ENCODE measurements at regions of chr4 and their contacts with region 1.

Region 1: GRCh38 chr4:40719008-40719623 is 30.6 kb upstream of the NSUN7 start:
- DNase-seq: no peak
- H3K4me3 ChIP-seq: no peak overlapping the region
- H3K27ac ChIP-seq: peak overlapping the region; percentile 73 to 79 (median 75)
- H3K4me1 ChIP-seq: peaks cover 8 to 42% (median 27%) of the 10 kb centered on the region in 4 donors
- H3K27me3 ChIP-seq: no peaks in the 10 kb centered on the region
- CTCF ChIP-seq: peak; percentile 29 to 72 (median 40)
- EP300 ChIP-seq: no peak
- POLR2A ChIP-seq: no peak

Region 2: DNA sequence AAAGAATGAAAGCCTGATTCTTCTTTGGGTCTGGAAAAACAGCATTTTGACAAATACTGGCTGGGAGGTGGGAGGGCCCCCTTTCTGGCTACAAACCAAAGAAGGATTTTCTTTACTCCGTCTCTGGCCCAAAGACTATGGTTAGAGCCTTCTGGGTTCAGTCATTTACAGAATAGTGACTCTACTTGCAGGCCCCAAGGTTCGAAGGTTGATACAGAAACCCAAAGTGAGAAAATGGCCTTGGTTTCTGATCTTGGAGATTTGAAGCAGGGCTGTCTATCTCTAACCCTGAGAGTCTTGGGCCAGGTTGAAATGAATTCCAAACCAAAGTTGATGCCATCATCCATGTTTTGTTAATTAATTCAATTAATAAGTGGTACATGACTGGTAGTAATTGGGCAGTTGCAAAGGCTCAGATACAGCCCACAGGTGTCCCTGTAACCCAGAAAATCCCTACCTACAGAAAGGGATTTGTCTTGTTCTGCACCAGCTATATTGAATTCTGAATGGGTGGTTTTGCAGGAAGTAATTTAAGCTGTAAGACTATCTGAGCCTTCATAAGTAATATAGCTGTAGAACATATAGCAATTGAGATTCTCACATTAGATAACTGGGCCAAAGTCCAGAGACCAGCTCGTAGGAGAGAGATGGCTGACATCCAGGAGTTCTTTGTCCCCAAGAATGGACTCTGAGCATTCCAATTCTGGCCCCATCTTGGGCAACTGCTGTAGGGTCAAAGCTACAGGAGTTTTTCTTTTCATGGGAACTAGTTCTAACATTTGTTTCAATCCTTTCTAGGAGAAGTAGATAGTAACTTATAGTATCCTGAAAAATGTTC is 349.5 kb before region 1 on chr4:
- in situ Hi-C with region 1: loop called in 1 of 4 experiments (anchors 10 kb)
- intact Hi-C with region 1: no loop called
- DNase-seq: peak; percentile 65
- H3K4me3 ChIP-seq: no peak overlapping the region
- H3K27ac ChIP-seq: peak overlapping the region; percentile 74 to 83 (median 80)
- H3K4me1 ChIP-seq: peaks cover 0 to 35% (median 15%) of the 10 kb centered on the region in 4 donors
- H3K27me3 ChIP-seq: no peaks in the 10 kb centered on the region
- CTCF ChIP-seq: no peak
- EP300 ChIP-seq: no peak
- POLR2A ChIP-seq: no peak

Region 3: GRCh38 chr4:40525811-40526598 is 193.1 kb before region 1 on chr4:
- in situ Hi-C with region 1: loop called in 1 of 4 experiments (anchors 25 kb)
- intact Hi-C with region 1: no loop called
- DNase-seq: no peak
- H3K4me3 ChIP-seq: no peak overlapping the region
- H3K27ac ChIP-seq: peak overlapping the region; percentile 28 to 51 (median 43)
- H3K4me1 ChIP-seq: peaks cover 0 to 17% (median 10%) of the 10 kb centered on the region in 4 donors
- H3K27me3 ChIP-seq: no peaks in the 10 kb centered on the region
- CTCF ChIP-seq: no peak
- EP300 ChIP-seq: no peak
- POLR2A ChIP-seq: no peak

Region 4: DNA sequence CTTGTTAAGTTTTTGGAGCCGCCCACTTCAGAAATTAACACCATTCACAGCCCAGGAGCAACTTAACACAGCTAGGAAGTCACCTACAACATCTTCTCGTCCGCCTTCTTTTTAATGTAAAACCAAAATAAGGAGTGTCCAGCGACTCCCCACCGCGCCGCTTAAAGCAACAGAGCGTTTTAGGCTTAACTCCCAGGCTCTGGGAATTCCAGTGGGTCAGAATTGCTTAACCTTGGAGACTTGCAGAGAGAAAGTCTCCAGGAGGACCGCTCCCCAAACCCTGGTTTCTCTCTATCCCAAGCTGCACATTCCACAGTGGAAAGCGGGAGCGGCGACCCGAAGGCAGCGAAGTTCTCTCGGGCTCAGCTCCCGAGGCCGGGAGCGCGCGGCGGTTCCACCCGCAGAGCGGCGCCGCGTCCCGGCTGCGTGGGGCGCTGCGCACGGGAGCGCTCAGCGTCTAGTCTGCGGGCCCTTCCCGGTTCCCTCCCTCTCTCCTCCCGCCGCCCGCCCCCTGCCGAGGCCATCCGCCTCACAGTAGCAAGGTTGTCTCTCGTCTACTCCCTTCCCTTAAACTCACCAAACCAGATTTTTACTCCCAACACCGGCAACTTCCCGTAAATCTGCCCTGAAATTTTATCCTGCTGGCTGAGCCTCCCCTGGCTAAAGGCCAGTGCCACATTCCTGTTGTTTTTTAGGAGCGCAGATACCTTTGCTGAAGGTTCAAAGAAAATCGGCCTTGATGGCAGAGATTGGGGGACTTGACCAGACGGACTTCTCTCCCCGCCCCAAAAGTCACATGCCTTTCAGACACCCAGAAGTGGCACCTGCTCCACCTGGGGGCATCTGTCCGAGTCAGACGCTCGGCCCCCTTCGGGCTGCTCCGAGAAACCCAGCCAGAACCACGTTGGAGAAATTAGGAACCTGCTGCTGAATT is 89.4 kb before region 1 on chr4 and contains the start of gene RBM47:
- in situ Hi-C with region 1: loop called in 1 of 4 experiments (anchors 10 kb)
- intact Hi-C with region 1: no loop called
- DNase-seq: peak; percentile 89
- H3K4me3 ChIP-seq: peak within 1 kb of the TSS; percentile 33 to 66 (median 48)
- H3K27ac ChIP-seq: peak within 1 kb of the TSS; percentile 89 to 93 (median 92)
- H3K4me1 ChIP-seq: peaks cover 0 to 42% (median 14%) of the 10 kb centered on the region in 4 donors
- H3K27me3 ChIP-seq: peaks cover 6% of the 10 kb centered on the region
- CTCF ChIP-seq: peak in 1 of 5 experiments; percentile 33
- EP300 ChIP-seq: no peak
- POLR2A ChIP-seq: peak; percentile 87
- total RNA-seq, gene RBM47: 273 to 667 (median 572) TPM

Measured in transverse colon (tissue), 4 donors.